ENCODE measurements at regions of chr10 and their contacts with region 1.

Region 1: GRCh38 chr10:110893559-110894179 is 21.9 kb downstream of the PDCD4 start:
- DNase-seq: no peak

Region 2: GRCh38 chr10:110610308-110610774 is 283.3 kb before region 1 on chr10:
- intact Hi-C with region 1: loop called (anchors 10 kb)
- DNase-seq: peak in 5 of 10 donors; percentile 29 to 86 (median 39)

Region 3: DNA sequence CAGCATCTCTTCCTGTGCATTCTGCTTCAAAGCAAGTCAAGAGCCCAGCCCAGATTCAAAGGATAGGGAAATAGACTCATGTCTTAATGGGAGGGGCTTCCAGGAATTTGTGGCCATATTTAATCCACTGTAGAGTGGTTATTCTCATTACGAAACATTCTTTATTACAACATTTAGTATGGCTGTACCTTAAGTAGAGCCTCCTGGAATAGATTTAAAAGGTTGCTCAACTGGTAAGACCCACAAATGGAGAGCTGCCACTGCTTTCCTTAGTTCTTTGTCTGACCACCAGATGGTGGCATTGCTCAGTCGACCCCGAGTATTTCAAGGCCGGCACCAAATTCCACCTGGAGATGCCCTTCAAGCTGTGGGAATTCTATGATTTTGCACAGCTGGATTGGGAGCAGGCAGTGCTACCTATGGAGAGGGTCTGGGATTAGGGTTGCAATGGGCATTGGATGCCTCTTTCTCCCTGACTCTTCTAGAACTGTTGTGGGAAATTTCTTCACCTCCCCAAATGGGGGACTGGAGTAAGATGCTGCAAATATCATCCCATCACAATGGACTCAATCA is 147.3 kb before region 1 on chr10:
- intact Hi-C with region 1: loop called (anchors 1 kb)
- DNase-seq: peak; percentile 18 to 91 (median 60)

Region 4: GRCh38 chr10:110765188-110765990 is 128.3 kb before region 1 on chr10:
- intact Hi-C with region 1: no loop called
- DNase-seq: no peak

Region 5: GRCh38 chr10:110803830-110804338 is 89.8 kb before region 1 on chr10:
- intact Hi-C with region 1: loop called (anchors 1 kb)
- DNase-seq: peak in 5 of 10 donors; percentile 38 to 89 (median 52)

Region 6: GRCh38 chr10:110918643-110919363 is 25.1 kb after region 1 on chr10 and contains the start of gene BBIP1:
- intact Hi-C with region 1: loop called (anchors 2 kb)
- DNase-seq: peak in 3 of 10 donors; percentile 78 to 97 (median 81)

Region 7: DNA sequence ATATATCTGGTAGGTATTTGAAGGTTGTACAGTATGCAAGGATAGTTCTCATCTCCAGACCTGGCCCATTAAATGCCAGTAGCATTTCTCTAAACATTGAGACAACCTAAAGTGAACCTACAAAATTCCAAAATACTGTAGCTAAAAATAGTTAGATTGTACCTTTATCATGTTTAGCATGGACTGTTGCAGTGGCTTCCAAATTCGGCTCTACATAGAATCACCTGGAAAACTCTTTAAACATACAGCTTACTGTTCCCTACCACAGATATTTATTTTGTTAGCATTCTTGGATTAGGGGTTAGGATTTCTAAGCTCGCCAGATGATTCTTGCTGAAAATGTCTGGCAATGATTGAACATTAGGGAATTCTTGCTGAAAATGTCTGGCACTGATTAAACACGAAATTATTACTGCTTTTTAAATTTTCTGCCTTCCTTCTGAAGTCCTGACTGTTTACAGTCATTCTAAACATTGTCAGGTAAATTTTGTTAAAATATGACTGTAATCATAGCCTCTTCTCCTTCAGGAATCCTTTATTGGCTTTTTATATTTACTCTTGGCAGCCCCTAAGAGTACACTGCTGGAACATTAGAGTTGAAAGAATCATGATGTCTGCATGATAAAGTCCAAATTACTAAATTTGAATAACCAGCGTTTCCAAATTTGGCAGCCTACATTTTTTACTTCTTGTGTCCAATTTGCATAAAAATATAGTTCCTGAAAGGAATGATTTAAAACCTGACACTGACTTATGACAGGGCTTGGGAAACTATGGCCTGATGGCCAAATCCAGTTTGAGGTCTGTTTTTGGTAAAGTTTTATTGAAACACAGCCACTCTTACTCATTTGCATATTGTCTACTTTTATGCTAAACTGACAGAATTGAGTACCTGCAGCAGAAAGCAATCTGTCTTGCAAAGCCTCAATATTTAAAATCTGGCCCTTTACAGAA is 66.0 kb after region 1 on chr10:
- intact Hi-C with region 1: no loop called
- DNase-seq: no peak

Region 8: DNA sequence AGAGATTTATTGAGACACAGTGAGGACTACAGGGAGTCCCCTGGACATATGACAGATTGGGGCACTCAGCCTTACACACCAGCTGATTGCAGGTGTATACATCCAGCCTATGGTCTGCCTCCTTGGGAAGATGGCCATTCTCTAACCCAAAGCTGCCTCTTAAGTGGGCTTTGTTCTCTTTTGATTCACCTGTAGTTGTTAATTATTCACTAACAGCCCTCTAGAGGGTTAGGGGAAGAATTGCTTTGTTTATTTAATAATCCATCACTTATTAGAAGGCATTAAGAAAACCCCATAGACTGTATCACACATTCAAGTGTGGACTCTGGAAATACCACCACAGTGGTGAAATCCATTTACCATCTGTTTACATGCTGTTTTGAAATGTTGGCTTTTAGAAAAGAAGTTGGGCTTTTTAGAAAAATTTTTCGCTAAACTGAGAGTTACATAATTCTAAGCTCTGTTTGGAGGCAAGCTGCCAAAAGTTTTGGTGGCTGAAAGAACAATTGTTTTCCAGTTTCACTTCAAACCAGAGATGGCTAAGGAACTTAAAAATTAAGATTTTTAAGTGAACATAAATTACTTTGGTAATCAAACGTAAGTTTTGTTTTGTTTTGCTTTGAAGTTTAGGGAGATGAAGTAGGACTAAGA is 562.2 kb after region 1 on chr10:
- intact Hi-C with region 1: no loop called
- DNase-seq: no peak